Transverse colon (tissue), 4 donors: ENCODE measurements at regions of chr16 and their contacts with region 1.

Region 1: GRCh38 chr16:75385507-75386152 is 47.7 kb downstream of the CFDP1 start:
- DNase-seq: no peak
- H3K4me3 ChIP-seq: no peak overlapping the region
- H3K27ac ChIP-seq: no peak overlapping the region
- H3K4me1 ChIP-seq: peaks cover 3 to 12% (median 5%) of the 10 kb centered on the region in 4 donors
- H3K27me3 ChIP-seq: no peaks in the 10 kb centered on the region
- CTCF ChIP-seq: peak; percentile 68 to 81 (median 77)
- EP300 ChIP-seq: no peak
- POLR2A ChIP-seq: no peak

Region 2: DNA sequence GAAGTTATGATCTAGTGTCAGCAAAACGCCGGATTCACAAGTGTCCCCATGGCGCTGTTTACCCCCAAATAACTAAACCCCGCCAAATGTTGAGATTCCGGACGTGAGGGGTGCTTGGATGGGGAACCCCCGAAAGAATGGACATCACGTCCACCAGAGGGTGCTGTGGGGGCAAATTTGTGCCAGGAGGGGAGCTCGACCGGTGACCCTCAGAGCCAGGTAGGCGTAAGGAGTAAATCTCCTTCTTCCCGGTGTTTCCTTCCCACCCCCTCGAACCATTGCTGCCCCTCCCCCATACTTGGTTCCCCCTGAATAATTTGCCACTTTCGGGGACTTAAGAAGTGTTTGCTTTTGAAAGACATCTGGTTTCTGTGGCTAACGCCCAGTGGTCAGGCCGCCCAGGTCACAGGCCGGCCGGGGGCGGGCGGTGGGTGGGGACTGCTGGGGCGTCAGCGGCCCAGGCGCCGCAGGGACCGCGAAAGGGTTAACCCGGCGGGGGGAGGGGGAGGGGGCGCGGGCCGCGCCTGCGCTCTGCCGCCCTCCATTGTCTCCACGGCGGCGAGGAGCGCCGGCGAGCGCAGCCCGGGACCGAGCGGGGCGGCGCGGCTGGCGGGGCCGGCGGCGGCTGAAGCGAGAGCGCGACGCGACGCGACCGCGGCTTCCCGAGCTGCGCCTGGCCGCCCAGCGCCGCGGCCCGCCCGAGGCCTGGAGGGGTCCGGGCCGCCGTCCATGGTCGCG is 387.0 kb before region 1 on chr16 and contains the start of gene ZNRF1:
- in situ Hi-C with region 1: loop called in 1 of 4 experiments (anchors 25 kb)
- intact Hi-C with region 1: no loop called
- DNase-seq: peak; percentile 88
- H3K4me3 ChIP-seq: peak within 1 kb of the TSS; percentile 77 to 97 (median 95)
- H3K27ac ChIP-seq: peak within 1 kb of the TSS; percentile 84 to 91 (median 88)
- H3K4me1 ChIP-seq: peaks cover 0 to 29% (median 21%) of the 10 kb centered on the region in 4 donors
- H3K27me3 ChIP-seq: no peaks in the 10 kb centered on the region
- CTCF ChIP-seq: peak; percentile 79 to 94 (median 85)
- EP300 ChIP-seq: no peak
- POLR2A ChIP-seq: no peak
- total RNA-seq, gene ZNRF1: 28.5 to 58.4 (median 40.4) TPM

Region 3: DNA sequence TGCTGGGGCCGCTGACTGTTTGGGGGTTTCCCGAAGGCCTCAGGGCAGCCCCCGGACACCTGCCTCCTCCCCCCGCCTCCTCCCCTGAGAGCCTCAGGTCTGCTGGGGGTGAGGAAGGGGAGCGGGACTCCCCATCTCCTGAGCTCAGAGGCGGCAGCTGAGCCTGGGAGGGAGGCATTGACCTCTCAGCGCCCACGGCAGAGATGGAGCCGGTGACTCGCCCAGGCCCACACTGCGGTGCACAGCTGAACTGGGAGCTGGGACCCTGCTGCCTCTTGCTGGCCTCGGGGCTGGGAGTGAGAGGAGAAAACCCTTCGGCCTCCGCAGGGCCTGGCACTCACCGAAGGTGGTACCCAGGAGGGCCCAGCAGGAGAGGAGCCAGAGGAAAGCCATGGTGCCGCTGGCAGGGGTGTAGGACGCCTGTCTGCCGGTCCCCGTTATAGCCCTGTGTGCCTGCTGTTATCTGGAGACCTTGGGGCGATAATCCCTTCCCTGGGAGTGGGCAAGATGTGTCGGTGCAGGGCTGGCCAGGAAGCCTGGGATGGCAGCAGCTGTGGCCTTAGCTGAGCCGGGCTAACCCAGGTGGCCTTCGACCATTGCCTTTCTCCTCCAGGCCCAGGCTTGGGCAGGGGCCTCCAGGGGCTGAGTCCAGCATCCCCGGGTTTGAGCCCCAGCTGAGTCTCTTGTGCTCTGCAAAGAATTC is 178.7 kb before region 1 on chr16 and contains the start of gene CTRB2:
- in situ Hi-C with region 1: loop called in 3 of 4 experiments (anchors 10 to 25 kb)
- intact Hi-C with region 1: no loop called
- DNase-seq: no peak
- H3K4me3 ChIP-seq: no peak within 1 kb of the TSS
- H3K27ac ChIP-seq: no peak within 1 kb of the TSS
- H3K4me1 ChIP-seq: no peaks in the 10 kb centered on the region
- H3K27me3 ChIP-seq: no peaks in the 10 kb centered on the region
- CTCF ChIP-seq: no peak
- EP300 ChIP-seq: no peak
- POLR2A ChIP-seq: no peak
- total RNA-seq, gene CTRB2: not detected

Region 4: DNA sequence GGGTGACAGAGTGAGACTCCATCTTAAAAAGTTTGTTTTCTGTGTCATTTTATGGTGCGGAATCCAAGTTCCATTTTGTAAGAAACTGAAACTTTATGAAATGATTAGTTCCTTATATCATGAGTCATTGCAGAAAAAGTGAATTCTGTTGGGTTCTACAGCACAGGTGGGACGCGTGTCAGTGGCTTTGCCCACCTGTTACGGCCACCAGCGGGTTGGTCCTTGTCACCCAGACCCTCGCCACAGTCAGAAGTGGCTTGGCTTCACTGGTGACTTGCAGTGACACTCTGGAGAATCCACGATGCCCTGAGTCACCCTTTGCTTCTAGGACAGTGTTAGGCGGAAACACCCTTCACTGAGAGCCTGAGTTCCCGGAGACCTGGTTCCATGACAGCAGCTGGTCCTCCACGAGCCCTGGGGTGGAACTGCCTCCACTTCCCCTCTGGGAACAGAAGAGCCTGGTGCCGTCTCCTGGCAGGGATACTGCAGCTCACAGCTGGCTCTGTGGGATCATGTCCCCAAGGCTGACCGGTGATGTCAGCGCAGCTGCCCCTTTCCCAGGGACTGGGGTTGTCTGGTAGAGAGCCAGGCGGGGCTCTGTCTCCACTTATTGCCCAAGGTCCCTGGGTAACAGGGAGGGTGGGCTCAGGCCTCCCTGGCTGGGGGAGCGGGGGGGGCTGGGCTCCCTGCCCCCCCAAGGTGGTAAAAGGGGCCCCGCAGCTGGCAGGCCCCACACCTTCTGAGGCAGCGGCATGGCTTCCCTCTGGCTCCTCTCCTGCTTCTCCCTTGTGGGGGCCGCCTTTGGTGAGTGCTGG is 167.2 kb before region 1 on chr16 and contains the start of gene CTRB1:
- in situ Hi-C with region 1: loop called in 3 of 4 experiments (anchors 5 to 25 kb)
- intact Hi-C with region 1: no loop called
- DNase-seq: no peak
- H3K4me3 ChIP-seq: no peak within 1 kb of the TSS
- H3K27ac ChIP-seq: no peak within 1 kb of the TSS
- H3K4me1 ChIP-seq: no peaks in the 10 kb centered on the region
- H3K27me3 ChIP-seq: no peaks in the 10 kb centered on the region
- CTCF ChIP-seq: no peak
- EP300 ChIP-seq: no peak
- POLR2A ChIP-seq: no peak
- total RNA-seq, gene CTRB1: not detected

Region 5: GRCh38 chr16:75234856-75235696 is 150.6 kb before region 1 on chr16:
- in situ Hi-C with region 1: loop called in 1 of 4 experiments (anchors 10 kb)
- intact Hi-C with region 1: loop called (anchors 1 kb)
- DNase-seq: no peak
- H3K4me3 ChIP-seq: no peak overlapping the region
- H3K27ac ChIP-seq: peak overlapping the region in 2 of 4 donors; percentile 54 to 69
- H3K4me1 ChIP-seq: peaks cover 25 to 33% (median 29%) of the 10 kb centered on the region in 4 donors
- H3K27me3 ChIP-seq: no peaks in the 10 kb centered on the region
- CTCF ChIP-seq: no peak
- EP300 ChIP-seq: no peak
- POLR2A ChIP-seq: no peak

Region 6: GRCh38 chr16:75244844-75245758 is 140.5 kb before region 1 on chr16:
- in situ Hi-C with region 1: loop called in 1 of 4 experiments (anchors 10 kb)
- intact Hi-C with region 1: no loop called
- DNase-seq: peak; percentile 74
- H3K4me3 ChIP-seq: no peak overlapping the region
- H3K27ac ChIP-seq: peak overlapping the region; percentile 94 to 97 (median 96)
- H3K4me1 ChIP-seq: peaks cover 58 to 66% (median 63%) of the 10 kb centered on the region in 4 donors
- H3K27me3 ChIP-seq: no peaks in the 10 kb centered on the region
- CTCF ChIP-seq: no peak
- EP300 ChIP-seq: no peak
- POLR2A ChIP-seq: peak; percentile 11

Region 7: DNA sequence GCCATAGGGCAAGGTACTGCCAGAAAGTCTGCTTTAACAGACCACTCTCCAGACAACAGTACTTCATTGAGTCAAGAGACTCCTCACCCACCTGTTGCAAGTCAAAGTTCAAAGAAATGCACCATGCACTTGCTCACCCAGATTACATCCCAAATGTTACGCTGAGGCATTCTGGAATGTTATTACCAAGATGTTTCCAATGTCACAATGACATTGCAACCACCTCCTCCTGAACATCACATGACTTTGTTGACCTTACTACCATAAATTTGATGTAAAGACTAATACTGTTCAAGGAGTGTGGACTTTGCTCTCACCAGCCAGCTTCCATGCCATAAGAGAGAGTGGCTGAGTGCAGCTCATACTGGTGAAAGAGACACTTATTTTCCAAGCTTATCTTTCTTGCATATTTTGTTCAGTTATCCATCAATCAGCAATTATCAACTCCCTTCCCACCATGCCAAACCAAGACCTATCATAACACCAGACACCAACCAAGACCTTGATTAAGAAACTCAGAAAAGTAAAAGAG is 75.7 kb before region 1 on chr16:
- in situ Hi-C with region 1: no loop called
- intact Hi-C with region 1: loop called (anchors 1 kb)
- DNase-seq: peak; percentile 34
- H3K4me3 ChIP-seq: no peak overlapping the region
- H3K27ac ChIP-seq: peak overlapping the region in 3 of 4 donors; percentile 21 to 43 (median 28)
- H3K4me1 ChIP-seq: peaks cover 12 to 42% (median 26%) of the 10 kb centered on the region in 4 donors
- H3K27me3 ChIP-seq: no peaks in the 10 kb centered on the region
- CTCF ChIP-seq: no peak
- EP300 ChIP-seq: peak; percentile 17
- POLR2A ChIP-seq: no peak